ENCODE measurements at regions of chr1 and their contacts with region 1.

Region 1: DNA sequence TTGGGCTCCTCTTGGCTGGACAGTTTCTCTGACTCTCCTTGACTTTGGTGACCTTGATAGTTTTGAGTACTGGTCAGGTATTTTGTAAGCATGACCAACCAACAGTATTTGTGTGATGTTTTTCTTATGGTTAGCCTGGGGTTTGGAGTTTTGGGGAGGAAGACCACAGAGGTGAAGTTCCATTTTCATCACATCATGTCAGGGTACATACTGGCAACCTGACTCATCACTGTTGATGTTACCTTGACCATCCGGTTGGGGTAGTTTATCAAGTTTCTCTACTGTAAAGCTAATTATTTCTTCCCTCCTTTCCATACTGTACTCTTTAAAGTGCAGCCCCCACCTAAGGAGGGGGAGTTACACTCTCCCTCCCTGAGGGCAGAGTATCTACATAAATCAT is 13.4 kb downstream of the OSCP1 start:
- DNase-seq: peak; percentile 74 to 98
- H3K4me3 ChIP-seq: no peak overlapping the region
- H3K27ac ChIP-seq: peak overlapping the region; percentile 100
- H3K4me1 ChIP-seq: peaks cover 33% of the 10 kb centered on the region
- H3K27me3 ChIP-seq: no peaks in the 10 kb centered on the region
- CTCF ChIP-seq: no peak

Region 2: DNA sequence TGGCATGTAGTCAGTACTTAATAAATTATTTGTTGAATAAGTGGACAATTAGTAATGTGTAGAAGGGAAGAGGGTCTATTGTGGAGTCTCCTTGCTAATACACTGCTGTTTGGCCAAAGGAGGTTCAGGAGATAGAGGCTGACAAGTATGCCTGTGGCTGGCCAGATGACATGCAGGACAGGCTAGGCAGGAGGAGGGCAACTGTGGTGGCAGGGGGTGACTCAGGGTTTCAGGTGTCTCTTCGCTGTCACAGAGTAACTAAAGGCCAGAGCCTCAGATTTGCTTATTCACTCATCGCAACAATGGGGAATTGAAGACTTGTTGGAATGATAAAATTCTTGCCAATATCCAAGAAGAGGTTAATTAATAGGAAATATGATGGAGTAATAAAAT is 179.4 kb before region 1 on chr1:
- CTCF ChIA-PET with region 1: no interaction called
- POLR2A ChIA-PET with region 1: interaction called, 9 read pairs
- intact Hi-C with region 1: loop called (anchors 1 kb)
- DNase-seq: peak; percentile 85 to 86
- H3K4me3 ChIP-seq: peak overlapping the region; percentile 35; the same call in 1 of the 2 replicates
- H3K27ac ChIP-seq: peak overlapping the region; percentile 99
- H3K4me1 ChIP-seq: peaks cover 54% of the 10 kb centered on the region
- H3K27me3 ChIP-seq: no peaks in the 10 kb centered on the region
- CTCF ChIP-seq: no peak

Region 3: DNA sequence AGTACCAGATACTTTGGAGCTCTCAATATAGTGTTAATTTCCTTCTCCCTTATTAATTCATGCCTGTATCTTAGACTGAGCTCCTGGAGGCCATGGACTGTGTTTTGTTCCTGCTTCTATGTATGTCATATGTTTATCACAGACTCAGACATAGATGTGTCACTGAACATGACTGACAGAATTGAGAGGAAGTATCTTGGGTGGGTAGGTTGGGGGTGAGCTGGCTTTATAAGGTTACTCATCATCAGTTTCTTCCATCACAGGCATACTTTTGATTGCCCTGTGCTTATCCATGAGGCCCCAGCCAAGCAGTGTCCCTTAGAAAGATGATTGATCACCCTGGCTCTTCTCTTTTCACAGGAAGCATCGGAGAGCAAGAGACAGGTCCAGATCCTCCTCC is 136.3 kb before region 1 on chr1:
- CTCF ChIA-PET with region 1: interaction called, 13 read pairs
- POLR2A ChIA-PET with region 1: no interaction called
- intact Hi-C with region 1: no loop called
- DNase-seq: peak in 1 of 2 experiments; percentile 60
- H3K4me3 ChIP-seq: no peak overlapping the region
- H3K27ac ChIP-seq: peak overlapping the region; percentile 89
- H3K4me1 ChIP-seq: peaks cover 32% of the 10 kb centered on the region
- H3K27me3 ChIP-seq: no peaks in the 10 kb centered on the region
- CTCF ChIP-seq: no peak

Region 4: DNA sequence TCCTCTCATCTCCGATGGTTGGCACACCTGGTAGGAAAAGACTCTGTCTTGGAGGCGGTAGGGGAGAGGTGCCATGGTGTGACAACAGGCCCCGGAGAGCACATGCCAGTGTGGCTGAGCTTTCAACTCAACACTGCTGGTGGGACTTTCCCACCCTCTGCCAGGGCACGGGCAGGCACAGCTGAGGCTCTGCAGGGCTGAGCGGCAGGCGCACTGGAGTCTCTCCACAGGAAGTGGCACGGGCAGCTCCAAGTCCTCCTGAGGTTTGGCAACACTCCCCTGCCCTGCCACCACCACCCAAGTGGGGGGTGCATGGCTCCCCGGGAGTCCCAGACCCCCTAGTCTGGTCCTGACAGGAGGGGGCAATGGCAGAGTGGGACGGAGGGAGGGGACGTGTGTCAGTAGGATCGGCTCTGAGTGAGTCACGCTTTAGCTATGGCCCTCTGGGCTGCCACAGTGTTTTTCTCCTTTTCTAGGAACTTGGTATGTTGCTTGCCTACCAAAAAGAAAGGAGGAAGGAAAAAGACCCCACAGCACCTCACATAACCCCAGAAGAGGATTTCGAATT is 86.1 kb before region 1 on chr1:
- CTCF ChIA-PET with region 1: interaction called, 3 read pairs
- POLR2A ChIA-PET with region 1: no interaction called
- intact Hi-C with region 1: loop called (anchors 1 kb)
- DNase-seq: peak; percentile 89 to 91
- H3K4me3 ChIP-seq: peak overlapping the region; percentile 41; the same call in 1 of the 2 replicates
- H3K27ac ChIP-seq: peak overlapping the region; percentile 97
- H3K4me1 ChIP-seq: peaks cover 67% of the 10 kb centered on the region
- H3K27me3 ChIP-seq: no peaks in the 10 kb centered on the region
- CTCF ChIP-seq: no peak

Region 5: GRCh38 chr1:36450270-36450918 is 13.6 kb after region 1 on chr1 and contains the start of gene OSCP1:
- CTCF ChIA-PET with region 1: no interaction called
- POLR2A ChIA-PET with region 1: interaction called, 14 read pairs
- intact Hi-C with region 1: loop called (anchors 1 kb)
- DNase-seq: peak; percentile 89 to 98
- H3K4me3 ChIP-seq: peak within 1 kb of the TSS; percentile 87
- H3K27ac ChIP-seq: peak within 1 kb of the TSS; percentile 73
- H3K4me1 ChIP-seq: no peaks in the 10 kb centered on the region
- H3K27me3 ChIP-seq: no peaks in the 10 kb centered on the region
- CTCF ChIP-seq: no peak; the same call in 1 of the 2 replicates
- total RNA-seq, gene OSCP1: 21.6 and 25.7 TPM in 2 replicates

Region 6: GRCh38 chr1:36486436-36487335 is 49.9 kb after region 1 on chr1:
- CTCF ChIA-PET with region 1: no interaction called
- POLR2A ChIA-PET with region 1: interaction called, 3 read pairs
- intact Hi-C with region 1: loop called (anchors 2 kb)
- DNase-seq: peak; percentile 90 to 97
- H3K4me3 ChIP-seq: peak overlapping the region; percentile 34; the same call in 1 of the 2 replicates
- H3K27ac ChIP-seq: peak overlapping the region; percentile 90
- H3K4me1 ChIP-seq: peaks cover 34% of the 10 kb centered on the region
- H3K27me3 ChIP-seq: no peaks in the 10 kb centered on the region
- CTCF ChIP-seq: no peak

Region 7: DNA sequence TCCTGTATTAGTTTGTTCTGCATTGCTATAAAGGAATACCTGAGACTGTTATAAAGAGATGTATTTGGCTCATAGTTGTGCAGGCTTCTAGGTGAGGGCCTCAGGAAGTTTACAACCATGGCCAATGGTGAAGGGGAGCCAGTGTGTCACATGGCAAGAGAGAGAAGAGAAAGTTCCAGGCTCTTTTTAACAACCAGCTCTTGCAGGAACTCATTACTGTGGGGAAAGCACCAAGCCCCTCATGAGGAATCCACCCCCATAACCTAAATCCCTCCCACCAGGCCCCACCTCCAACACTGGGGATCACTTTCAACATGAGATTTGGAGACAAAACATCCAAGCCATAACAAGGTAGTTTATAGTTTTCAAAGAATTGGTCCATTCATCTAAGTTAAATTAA is 1082.8 kb after region 1 on chr1:
- CTCF ChIA-PET with region 1: interaction called, 14 read pairs
- POLR2A ChIA-PET with region 1: no interaction called
- intact Hi-C with region 1: no loop called
- DNase-seq: no peak
- H3K4me3 ChIP-seq: no peak overlapping the region
- H3K27ac ChIP-seq: no peak overlapping the region
- H3K4me1 ChIP-seq: peaks cover 8% of the 10 kb centered on the region
- H3K27me3 ChIP-seq: no peaks in the 10 kb centered on the region
- CTCF ChIP-seq: no peak

Measured in PC-9 (cell line).